ENCODE measurements at regions of chr17 and their contacts with region 1.

Region 1: DNA sequence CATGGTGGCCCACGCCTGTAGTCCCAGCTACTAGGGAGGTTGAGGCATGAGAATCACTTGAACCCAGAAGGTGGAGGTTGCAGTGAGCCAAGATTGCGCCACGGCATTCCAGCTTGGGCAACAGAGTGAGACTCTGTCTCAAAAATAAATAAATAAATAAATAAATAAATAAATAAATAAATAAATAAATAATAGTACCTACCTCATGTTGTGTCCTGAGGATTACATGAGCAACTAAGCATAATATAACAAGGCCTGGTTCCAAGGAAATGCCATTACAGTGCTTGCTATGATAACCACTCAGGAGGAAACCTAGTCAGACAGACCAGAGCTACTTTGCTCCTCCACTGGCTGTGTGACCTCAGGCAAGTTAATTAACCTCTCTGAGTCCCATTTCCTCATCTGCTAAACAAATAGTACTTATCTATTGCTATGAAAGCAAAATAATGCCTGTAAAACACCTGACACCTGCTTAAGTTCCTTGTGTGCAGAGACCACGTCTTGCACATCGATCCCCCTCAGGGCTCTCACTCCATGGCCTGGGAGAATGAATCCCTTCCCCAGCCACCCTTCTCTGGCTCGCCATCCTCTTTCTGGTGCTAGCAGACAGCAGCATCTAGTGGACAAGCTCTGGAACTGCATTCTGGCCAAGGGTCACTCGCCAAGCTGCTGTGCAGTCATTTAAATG is 7.5 kb downstream of the EPOP start:
- DNase-seq: peak; percentile 96
- H3K4me3 Mint-ChIP-seq: no peak overlapping the region
- H3K27ac Mint-ChIP-seq: no peak overlapping the region
- H3K4me1 Mint-ChIP-seq: peaks cover 15% of the 10 kb centered on the region
- H3K27me3 Mint-ChIP-seq: peaks cover 69% of the 10 kb centered on the region
- CTCF ChIP-seq: peak; percentile 100

Region 2: GRCh38 chr17:38403491-38403890 is 263.8 kb before region 1 on chr17:
- CTCF ChIA-PET with region 1: no interaction called
- intact Hi-C with region 1: no loop called
- DNase-seq: no peak
- H3K4me3 Mint-ChIP-seq: no peak overlapping the region
- H3K27ac Mint-ChIP-seq: no peak overlapping the region
- H3K4me1 Mint-ChIP-seq: no peaks in the 10 kb centered on the region
- H3K27me3 Mint-ChIP-seq: no peaks in the 10 kb centered on the region
- CTCF ChIP-seq: no peak

Region 3: DNA sequence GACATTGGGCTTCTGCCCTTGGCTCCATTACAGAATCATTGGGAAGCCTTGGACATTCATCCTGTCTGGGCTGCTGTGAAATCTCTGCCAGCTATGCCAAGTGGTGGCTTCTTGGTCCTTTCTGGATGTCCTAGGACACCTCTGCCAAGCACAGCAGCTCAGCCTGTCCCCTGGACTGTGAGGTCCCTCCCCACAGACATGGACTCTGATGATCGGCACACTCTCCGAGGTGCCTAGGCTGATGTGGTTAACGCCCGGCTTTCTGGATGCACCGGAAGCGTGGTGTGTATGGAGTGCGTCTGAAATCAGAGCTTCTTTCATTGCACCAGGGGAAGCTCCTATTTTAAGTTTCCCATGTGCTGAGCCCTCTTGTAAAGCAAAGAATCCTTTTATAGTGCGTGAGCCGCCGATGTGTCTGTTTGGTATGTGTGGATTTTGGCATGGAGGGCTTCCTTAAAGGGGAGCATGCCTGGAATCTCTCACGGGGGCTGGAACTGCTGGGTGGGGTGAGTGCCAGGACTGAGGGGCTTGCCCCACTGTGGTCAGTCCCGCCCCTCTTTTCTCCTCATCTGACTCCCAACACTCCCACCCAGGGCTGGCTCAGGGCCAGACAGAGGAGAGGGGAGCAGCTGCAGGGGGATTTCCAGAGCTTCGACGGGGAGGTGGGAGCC is 245.9 kb before region 1 on chr17:
- CTCF ChIA-PET with region 1: interaction called, 22 read pairs
- intact Hi-C with region 1: loop called (anchors 2 kb)
- DNase-seq: no peak
- H3K4me3 Mint-ChIP-seq: no peak overlapping the region
- H3K27ac Mint-ChIP-seq: no peak overlapping the region
- H3K4me1 Mint-ChIP-seq: peaks cover 29% of the 10 kb centered on the region
- H3K27me3 Mint-ChIP-seq: peaks cover 98% of the 10 kb centered on the region
- CTCF ChIP-seq: no peak

Region 4: GRCh38 chr17:38451840-38452529 is 215.3 kb before region 1 on chr17:
- CTCF ChIA-PET with region 1: interaction called, 11 read pairs
- intact Hi-C with region 1: no loop called
- DNase-seq: peak; percentile 73
- H3K4me3 Mint-ChIP-seq: peak overlapping the region; percentile 85
- H3K27ac Mint-ChIP-seq: peak overlapping the region; percentile 50
- H3K4me1 Mint-ChIP-seq: peaks cover 74% of the 10 kb centered on the region
- H3K27me3 Mint-ChIP-seq: peaks cover 36% of the 10 kb centered on the region
- CTCF ChIP-seq: no peak

Region 5: DNA sequence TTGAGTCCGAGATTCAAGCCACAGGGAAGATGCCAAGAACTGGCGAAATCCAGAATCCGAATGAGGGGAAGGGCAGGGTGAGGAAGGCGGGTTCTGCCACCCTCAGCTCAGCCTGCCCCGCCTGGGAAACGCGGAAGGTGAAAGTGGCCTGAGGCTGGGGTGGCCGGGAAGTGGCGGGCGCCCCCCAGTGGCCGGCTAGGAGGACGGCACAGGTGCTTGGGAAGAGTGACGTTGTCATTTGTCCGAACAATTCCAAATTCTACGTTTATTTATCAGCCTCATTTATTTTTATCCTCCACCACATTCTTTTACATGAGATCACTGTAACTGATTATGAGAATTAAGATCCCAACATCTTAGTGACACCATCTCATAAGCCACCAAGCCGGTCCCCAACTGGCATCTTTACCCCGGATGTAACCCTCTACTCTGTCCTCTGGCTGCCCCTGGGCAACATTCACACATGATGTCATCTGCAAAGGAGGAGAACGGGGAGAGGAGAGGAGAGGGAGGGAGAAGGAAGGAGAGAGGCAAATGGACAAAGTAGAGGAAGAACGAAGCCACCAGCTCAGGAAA is 82.8 kb before region 1 on chr17:
- CTCF ChIA-PET with region 1: interaction called, 26 read pairs
- intact Hi-C with region 1: loop called (anchors 1 kb)
- DNase-seq: peak; percentile 99
- H3K4me3 Mint-ChIP-seq: peak overlapping the region; percentile 9
- H3K27ac Mint-ChIP-seq: peak overlapping the region; percentile 3
- H3K4me1 Mint-ChIP-seq: peaks cover 37% of the 10 kb centered on the region
- H3K27me3 Mint-ChIP-seq: peaks cover 71% of the 10 kb centered on the region
- CTCF ChIP-seq: peak; percentile 100

Region 6: DNA sequence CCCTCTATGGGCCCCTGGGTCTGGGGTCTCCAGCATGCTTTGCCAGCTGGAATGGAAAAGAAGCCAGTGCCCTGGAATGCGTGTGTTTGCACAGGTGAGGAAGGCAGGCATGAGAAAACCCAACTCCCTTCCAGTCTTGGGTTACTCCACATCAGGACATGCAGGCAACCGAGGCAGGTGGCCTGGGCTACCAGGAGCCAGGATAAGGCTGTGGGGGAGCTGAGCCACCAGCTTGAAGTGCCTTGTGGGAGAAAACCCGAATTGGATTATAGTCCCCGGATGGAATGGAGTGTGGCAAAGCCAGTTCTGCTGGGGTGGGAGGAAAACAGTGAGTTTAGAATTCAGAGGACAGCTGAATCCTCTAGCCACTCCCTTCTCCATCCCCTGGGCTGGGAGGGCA is 68.7 kb before region 1 on chr17:
- CTCF ChIA-PET with region 1: interaction called, 17 read pairs
- intact Hi-C with region 1: no loop called
- DNase-seq: peak; percentile 98
- H3K4me3 Mint-ChIP-seq: no peak overlapping the region
- H3K27ac Mint-ChIP-seq: no peak overlapping the region
- H3K4me1 Mint-ChIP-seq: peaks cover 21% of the 10 kb centered on the region
- H3K27me3 Mint-ChIP-seq: peaks cover 99% of the 10 kb centered on the region
- CTCF ChIP-seq: no peak

Region 7: DNA sequence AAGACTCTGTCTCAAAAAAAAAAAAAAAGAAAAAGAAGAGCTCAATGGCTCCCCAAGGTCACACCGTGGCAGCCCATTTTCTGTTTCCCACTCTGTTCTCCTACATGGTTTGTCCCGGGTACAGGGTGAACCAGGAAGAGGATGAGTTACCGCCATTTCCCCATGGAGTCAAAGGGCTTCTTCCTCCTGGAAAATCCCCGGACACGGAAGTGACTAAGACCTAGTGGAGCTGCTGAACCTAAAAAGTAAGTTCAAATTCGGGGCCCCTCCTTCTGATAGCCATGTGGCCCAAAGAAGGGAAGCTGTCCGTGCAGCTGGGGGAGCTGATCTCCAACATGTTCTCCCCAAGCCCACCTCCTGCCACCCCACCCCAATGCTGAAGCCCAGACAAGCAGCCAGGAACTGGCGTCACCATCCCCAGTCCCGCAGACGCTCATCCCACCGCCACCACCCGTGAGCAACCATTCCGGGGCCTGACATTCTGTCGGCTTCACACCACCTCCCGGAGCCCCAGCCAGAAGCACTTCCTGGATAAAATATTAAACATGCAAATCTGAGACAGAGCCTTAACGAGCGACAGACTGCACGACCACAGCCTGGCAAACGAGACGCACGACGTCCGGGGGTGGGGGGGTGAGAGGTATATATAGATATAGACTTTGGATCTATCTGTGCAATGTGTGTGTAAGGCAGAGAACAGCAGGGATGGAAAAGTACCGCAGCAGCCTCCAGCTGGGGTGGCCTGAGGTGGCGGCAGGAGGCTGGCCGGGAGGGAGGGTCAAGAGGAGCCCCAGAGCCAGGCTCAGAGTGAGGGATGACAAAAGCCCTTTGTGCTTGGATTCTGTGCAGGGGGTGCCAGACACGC is 10.1 kb before region 1 on chr17:
- CTCF ChIA-PET with region 1: interaction called, 37 read pairs
- intact Hi-C with region 1: no loop called
- DNase-seq: peak; percentile 88
- H3K4me3 Mint-ChIP-seq: peak overlapping the region; percentile 36
- H3K27ac Mint-ChIP-seq: peak overlapping the region; percentile 31
- H3K4me1 Mint-ChIP-seq: peaks cover 30% of the 10 kb centered on the region
- H3K27me3 Mint-ChIP-seq: peaks cover 49% of the 10 kb centered on the region
- CTCF ChIP-seq: no peak

Measured in Calu3 (cell line).